Caco-2 (cell line): ENCODE measurements at regions of chr20 and their contacts with region 1.

Region 1: DNA sequence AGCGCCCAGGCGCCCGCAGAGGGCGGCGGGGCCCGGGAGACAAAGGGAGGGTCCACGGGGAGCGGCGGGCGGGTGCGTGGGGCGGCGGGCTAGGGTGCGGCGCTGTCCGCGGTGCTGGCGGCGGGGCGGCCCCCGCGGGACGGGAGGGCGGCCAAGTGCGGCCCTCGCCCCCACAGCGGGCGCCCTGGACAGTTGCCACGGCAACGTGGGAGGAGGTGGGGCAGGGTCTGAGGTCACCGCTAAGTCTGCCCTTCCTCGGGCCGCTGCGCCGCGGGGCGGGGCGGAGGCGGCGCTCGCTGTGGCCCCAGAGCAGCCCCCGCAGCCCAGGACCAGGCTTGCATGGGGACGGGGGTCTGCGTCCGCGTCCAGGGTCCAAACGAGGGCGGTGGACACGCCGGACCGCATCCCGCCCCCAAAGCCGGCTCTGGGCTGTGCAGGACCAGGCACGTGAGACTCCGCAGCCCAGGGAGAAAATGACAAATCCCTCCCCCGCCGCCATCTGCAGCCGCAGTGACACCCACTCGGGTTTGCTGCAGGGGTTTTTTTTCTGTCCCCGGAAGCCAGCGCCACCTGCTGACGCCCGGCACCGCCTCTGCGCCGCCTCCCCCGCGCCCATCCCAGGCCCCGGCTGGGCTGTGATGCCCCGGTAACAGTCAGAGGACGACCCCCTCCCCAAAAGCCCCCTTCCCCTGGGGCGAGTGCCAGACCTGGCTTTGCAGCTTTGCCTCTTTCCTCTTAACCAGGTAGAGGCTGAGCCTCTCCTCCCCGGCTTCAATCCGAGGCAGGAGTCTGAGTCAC is 36.8 kb downstream of the YTHDF1 start:
- DNase-seq: peak; percentile 85 to 88
- H3K4me3 ChIP-seq: peak overlapping the region; percentile 42
- H3K4me3 Mint-ChIP-seq: peak overlapping the region; percentile 71
- H3K27ac Mint-ChIP-seq: no peak overlapping the region
- H3K4me1 ChIP-seq: peaks cover 39% of the 10 kb centered on the region
- H3K4me1 Mint-ChIP-seq: peaks cover 6% of the 10 kb centered on the region
- H3K27me3 ChIP-seq: 0 out of 2 replicates have a peak, but pooled peaks cover 2% of the 10 kb centered on the region
- H3K27me3 Mint-ChIP-seq: peaks cover 18% of the 10 kb centered on the region
- CTCF ChIP-seq: peak; percentile 92 to 94

Region 2: DNA sequence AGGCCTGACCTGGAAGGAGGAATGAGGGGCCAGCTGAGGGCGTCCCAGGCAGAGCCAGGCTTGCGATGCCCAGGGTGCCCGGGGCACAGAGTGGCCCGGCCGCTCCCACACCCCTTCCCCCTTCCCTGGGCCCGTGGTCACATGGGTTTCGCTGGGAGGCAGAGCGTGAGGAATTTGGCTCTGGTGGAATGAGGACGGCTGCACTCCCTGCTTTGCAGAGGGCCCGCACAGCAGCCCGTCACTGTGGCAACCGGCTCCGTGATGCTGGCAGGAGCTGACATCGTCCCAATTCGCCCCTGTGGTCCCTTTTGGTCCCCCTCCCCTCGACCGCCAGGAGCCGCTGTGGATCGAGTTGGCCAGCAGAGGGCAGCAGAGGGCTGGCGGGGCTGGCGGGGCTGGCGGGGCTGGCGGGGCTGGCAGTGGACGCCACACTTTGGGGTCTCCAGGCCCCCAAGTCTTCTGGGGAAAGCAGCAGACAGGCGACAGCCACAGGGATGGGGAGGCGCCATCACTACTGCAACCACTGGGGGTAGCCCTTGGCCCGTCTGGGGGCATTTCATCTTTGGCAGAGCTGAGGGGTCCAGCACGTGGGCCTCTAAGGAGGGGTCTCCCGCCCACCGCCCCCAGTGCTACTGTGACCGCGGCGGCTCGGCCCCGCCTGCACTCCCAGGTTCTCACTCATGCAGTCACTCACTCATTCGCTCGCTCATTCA is 122.7 kb before region 1 on chr20:
- CTCF ChIA-PET with region 1: interaction called, 11 read pairs
- POLR2A ChIA-PET with region 1: no interaction called
- intact Hi-C with region 1: loop called (anchors 1 kb)
- DNase-seq: peak; percentile 70 to 91
- H3K4me3 ChIP-seq: no peak overlapping the region
- H3K4me3 Mint-ChIP-seq: no peak overlapping the region
- H3K27ac Mint-ChIP-seq: no peak overlapping the region
- H3K4me1 ChIP-seq: peaks cover 11% of the 10 kb centered on the region
- H3K4me1 Mint-ChIP-seq: no peaks in the 10 kb centered on the region
- H3K27me3 ChIP-seq: no peaks in the 10 kb centered on the region
- H3K27me3 Mint-ChIP-seq: peaks cover 3% of the 10 kb centered on the region
- CTCF ChIP-seq: peak; percentile 98 to 100

Region 3: DNA sequence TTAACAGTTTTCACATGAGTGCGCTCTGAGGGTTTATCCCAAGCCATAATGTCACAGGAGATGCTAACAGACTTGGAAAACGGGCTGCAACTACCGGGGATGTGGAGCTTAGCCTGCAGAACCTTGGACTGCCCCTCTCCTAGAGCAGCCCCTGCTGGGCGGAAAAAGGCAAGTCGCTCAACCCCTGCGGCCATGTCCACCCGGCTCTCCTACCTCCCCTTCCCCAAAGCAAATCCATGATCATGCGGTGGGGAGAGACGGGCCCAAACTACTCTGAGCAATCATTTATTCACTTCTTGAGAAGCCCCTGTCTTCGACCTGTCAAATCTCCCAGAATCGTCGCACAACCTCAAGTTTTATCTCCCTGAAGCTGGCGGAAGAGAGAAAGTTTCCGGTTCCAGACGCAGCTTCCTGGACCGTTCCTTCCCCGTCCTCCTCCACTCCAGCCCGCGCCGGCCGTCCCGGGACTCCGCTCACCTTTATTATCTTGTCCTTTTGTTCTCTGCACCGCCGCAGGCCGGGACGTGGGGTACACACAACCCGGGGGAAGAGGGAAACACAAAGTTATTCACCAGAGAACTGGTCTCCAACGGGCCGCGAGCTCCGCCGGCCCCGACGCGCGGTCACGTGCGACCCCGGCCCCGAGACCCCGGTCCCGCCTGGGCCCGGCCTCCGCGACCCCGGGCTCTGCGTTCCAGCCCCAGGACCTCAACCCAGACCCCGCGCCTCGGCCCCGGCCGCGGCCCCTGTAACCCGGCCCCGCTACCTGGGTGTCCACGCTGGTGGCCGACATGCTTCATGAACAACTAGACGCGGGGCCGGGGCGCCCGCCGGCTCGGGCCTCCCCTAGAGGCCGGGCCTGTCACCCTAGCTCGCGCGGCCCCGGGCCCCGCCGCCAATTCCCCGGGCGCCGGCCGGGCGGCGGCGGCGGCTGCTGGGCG is 36.3 kb after region 1 on chr20:
- CTCF ChIA-PET with region 1: interaction called, 9 read pairs
- POLR2A ChIA-PET with region 1: no interaction called
- intact Hi-C with region 1: loop called (anchors 2 kb)
- DNase-seq: peak; percentile 89 to 90
- H3K4me3 ChIP-seq: peak overlapping the region; percentile 94
- H3K4me3 Mint-ChIP-seq: peak overlapping the region; percentile 92
- H3K27ac Mint-ChIP-seq: peak overlapping the region; percentile 84
- H3K4me1 ChIP-seq: peaks cover 40% of the 10 kb centered on the region
- H3K4me1 Mint-ChIP-seq: peaks cover 47% of the 10 kb centered on the region
- H3K27me3 ChIP-seq: no peaks in the 10 kb centered on the region
- H3K27me3 Mint-ChIP-seq: peaks cover 3% of the 10 kb centered on the region
- CTCF ChIP-seq: peak; percentile 80 to 97

Region 4: DNA sequence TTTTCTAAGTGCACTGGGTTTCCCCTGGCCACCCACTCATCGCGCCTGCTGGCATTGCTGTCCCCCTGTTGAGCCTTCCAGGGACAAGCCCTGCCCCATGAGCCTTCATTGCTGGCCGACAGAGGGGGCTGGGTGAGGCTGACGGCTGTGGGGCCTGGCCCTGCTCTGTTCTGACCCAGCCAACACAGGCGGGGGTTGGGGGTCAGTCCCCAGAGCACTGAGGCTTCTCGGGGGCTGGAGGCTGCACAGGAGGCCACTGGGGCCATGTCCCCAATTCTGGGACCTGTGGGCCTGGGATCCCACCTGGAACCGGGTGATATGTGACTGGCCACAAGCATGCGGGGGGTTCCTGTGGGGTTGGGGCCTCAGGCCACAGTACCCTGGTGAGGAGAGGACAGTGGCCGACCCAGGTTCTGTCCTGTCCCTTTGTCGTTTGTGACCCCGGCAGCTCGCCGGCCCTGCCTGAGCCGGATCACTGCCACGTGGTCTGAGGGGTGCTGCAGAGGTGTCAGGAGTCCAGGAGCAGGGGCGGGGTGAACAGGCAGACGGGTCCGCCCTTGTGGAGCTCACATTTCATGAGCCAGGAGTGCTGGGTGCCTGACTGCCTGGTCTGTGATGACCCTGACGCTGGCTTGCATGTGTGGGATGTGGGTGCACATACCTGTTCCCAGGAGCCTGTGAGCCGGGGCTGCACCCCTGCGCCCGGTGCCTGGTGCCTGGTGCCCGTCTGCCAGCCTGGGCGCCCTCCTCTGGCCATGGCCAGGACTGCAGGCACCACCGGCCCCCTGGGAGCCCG is 111.8 kb after region 1 on chr20:
- CTCF ChIA-PET with region 1: no interaction called
- POLR2A ChIA-PET with region 1: no interaction called
- intact Hi-C with region 1: loop called (anchors 5 kb)
- DNase-seq: peak in 1 of 2 experiments; percentile 84
- H3K4me3 ChIP-seq: no peak overlapping the region
- H3K4me3 Mint-ChIP-seq: no peak overlapping the region
- H3K27ac Mint-ChIP-seq: peak overlapping the region; percentile 48
- H3K4me1 ChIP-seq: 0 out of 2 replicates have a peak, but pooled peaks cover 5% of the 10 kb centered on the region
- H3K4me1 Mint-ChIP-seq: no peaks in the 10 kb centered on the region
- H3K27me3 ChIP-seq: no peaks in the 10 kb centered on the region
- H3K27me3 Mint-ChIP-seq: no peaks in the 10 kb centered on the region
- CTCF ChIP-seq: peak; percentile 81 to 84